Dendritic cell treated with granulocyte-macrophage colony-stimulating factor and Interleukin-4, amounts not matched to agents 40 ng/mL and 50 ng/mL, for 4 days (primary cell): ENCODE measurements at regions of chr9 and their contacts with region 1.

Region 1: GRCh38 chr9:136865735-136866103 is 389 bp downstream of the EDF1 start:
- H3K4me3 Mint-ChIP-seq: peak overlapping the region; percentile 85
- H3K27ac Mint-ChIP-seq: peak overlapping the region; percentile 85
- H3K4me1 Mint-ChIP-seq: peaks cover 16% of the 10 kb centered on the region
- H3K27me3 Mint-ChIP-seq: no peaks in the 10 kb centered on the region

Region 2: GRCh38 chr9:136742591-136743391 is 122.9 kb before region 1 on chr9 and contains the start of gene LCN10:
- intact Hi-C with region 1: no loop called
- H3K4me3 Mint-ChIP-seq: no peak within 1 kb of the TSS
- H3K27ac Mint-ChIP-seq: no peak within 1 kb of the TSS
- H3K4me1 Mint-ChIP-seq: peaks cover 11% of the 10 kb centered on the region
- H3K27me3 Mint-ChIP-seq: peaks cover 75% of the 10 kb centered on the region

Region 3: GRCh38 chr9:136829981-136830885 is 35.5 kb before region 1 on chr9:
- intact Hi-C with region 1: no loop called
- H3K4me3 Mint-ChIP-seq: no peak overlapping the region
- H3K27ac Mint-ChIP-seq: no peak overlapping the region
- H3K4me1 Mint-ChIP-seq: no peaks in the 10 kb centered on the region
- H3K27me3 Mint-ChIP-seq: no peaks in the 10 kb centered on the region

Region 4: GRCh38 chr9:136885950-136886578 is 20.3 kb after region 1 on chr9 and contains the start of gene TRAF2:
- intact Hi-C with region 1: loop called (anchors 2 kb)
- H3K4me3 Mint-ChIP-seq: peak within 1 kb of the TSS; percentile 89
- H3K27ac Mint-ChIP-seq: peak within 1 kb of the TSS; percentile 79
- H3K4me1 Mint-ChIP-seq: peaks cover 46% of the 10 kb centered on the region
- H3K27me3 Mint-ChIP-seq: no peaks in the 10 kb centered on the region